Heart left ventricle (tissue), 16 donors: ENCODE measurements at regions of chr10 and their contacts with region 1.

Region 1: GRCh38 chr10:129345763-129346162 is 121.3 kb upstream of the MGMT start:
- DNase-seq: no peak
- ATAC-seq: no peak
- H3K4me3 ChIP-seq: no peak overlapping the region
- H3K27ac ChIP-seq: no peak overlapping the region
- H3K4me1 ChIP-seq: no peaks in the 10 kb centered on the region
- H3K27me3 ChIP-seq: no peaks in the 10 kb centered on the region
- CTCF ChIP-seq: no peak
- POLR2A ChIP-seq: no peak

Region 2: GRCh38 chr10:129833994-129834739 is 488.4 kb after region 1 on chr10:
- intact Hi-C with region 1: loop called in 1 of 10 experiments (anchors 5 kb)
- DNase-seq: no peak
- ATAC-seq: peak in 1 of 4 donors; percentile 21
- H3K4me3 ChIP-seq: no peak overlapping the region
- H3K27ac ChIP-seq: no peak overlapping the region
- H3K4me1 ChIP-seq: no peaks in the 10 kb centered on the region
- H3K27me3 ChIP-seq: no peaks in the 10 kb centered on the region
- CTCF ChIP-seq: no peak
- POLR2A ChIP-seq: no peak